Activated CD8-positive, alpha-beta T cell treated with anti-CD3 and anti-CD28 coated beads, Interleukin-2, amount 10 ng/mL, durations not matched to agents 7 days and 5 days (primary cell): ENCODE measurements at regions of chr16 and their contacts with region 1.

Region 1: DNA sequence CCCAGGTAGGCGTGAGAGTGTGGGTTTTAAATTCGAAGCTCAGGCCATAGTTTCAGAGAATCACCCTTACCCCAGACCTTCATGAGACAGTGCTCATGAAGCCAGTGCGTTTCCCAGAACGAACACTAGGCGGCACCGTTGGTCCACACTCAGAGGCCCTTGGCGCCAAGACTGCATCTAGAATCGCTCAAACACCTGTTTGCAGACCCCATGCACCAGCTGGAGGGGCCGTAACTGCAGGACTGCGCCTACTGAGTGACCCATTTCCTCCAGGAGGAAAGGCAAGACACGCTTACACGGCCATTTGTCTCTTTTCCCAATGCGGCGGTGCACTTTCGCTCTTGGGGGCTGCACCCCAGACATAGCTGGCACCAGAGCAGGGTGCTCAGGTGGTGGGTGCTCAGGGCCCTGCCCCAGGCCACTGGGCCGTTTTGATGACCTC is 34.0 kb downstream of the ADGRG5 start:
- DNase-seq: peak; percentile 93
- ATAC-seq: peak; percentile 72
- H3K4me3 Mint-ChIP-seq: peak overlapping the region; percentile 2
- H3K27ac Mint-ChIP-seq: peak overlapping the region; percentile 82
- H3K4me1 Mint-ChIP-seq: peaks cover 67% of the 10 kb centered on the region
- H3K27me3 Mint-ChIP-seq: no peaks in the 10 kb centered on the region

Region 2: DNA sequence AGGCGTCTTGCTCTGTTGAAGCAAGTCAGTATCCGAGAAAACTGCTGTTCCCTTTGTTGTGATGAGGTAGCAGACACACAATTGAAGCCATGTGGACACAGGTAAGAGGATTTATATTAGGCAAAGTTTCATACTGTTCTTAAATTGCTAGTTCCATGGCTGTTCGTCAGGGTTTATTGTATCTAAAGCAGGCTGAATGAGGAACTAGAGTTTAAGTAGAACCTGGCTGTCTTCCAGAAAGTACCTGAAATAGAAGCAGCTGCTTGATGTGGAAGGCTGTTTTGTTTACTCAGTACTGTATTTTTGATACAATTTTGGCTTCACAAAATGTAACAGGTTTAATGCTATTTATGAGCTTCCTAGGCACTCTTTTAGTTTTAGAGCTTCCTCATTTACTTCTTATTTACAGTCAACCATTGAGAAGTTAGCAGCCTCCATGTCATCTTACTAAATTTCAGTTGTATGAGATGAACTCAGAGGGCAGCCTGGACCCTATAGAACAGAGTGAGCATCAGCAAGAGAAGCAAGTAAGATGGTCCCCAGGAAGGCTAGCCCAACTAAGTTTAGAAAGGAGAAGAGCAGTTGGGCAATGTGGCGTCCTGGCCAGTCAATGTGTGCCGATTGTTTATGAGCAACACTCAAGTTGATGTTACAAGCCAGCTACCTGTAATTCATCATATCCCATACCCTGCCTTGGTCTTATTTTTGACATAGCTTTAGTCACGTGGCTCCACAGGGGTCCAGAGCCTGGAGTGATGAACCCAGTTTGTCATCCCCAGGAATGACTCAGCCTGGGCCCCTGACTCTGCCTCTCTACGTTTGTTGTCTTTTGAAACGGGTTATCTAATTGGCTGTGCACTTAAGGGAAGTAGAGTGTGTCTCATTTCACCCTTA is 341.1 kb before region 1 on chr16:
- CTCF ChIA-PET with region 1: no interaction called
- POLR2A ChIA-PET with region 1: no interaction called
- DNase-seq: no peak
- ATAC-seq: no peak
- H3K4me3 Mint-ChIP-seq: no peak overlapping the region
- H3K27ac Mint-ChIP-seq: no peak overlapping the region
- H3K4me1 Mint-ChIP-seq: peaks cover 8% of the 10 kb centered on the region
- H3K27me3 Mint-ChIP-seq: no peaks in the 10 kb centered on the region

Region 3: DNA sequence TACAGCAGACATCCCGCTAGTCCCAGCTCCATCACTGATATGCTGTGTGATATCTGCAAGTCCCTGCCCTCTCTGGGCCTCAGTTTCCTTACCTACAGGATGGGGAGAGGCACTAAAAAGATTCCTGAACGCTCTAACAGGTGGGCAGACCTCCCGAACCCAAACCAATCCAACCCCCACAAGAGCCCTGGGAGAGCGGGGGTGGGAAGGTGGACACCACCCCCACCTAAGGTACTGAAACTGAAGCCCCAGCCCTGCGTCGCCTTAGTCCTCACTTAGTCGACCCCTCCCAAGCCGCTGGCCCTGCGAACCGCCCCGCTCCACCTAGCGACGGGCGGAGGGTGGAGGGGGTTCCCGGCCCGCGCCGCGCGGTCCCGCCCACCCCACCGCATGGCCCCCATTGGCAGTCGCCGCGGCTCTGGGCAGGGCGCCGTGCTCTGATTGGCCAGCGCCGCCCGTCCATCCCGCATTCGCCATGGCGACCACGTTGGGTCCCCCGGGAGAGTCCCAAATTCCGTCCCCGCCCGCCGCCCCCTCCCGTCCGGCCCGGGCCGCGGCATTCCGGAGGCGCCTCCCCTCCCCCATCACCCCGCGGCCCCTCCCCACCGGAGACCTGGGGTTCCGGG is 40.7 kb before region 1 on chr16:
- CTCF ChIA-PET with region 1: interaction called, 31 read pairs
- POLR2A ChIA-PET with region 1: interaction called, 6 read pairs
- DNase-seq: peak; percentile 94
- ATAC-seq: peak; percentile 87
- H3K4me3 Mint-ChIP-seq: peak overlapping the region; percentile 85
- H3K27ac Mint-ChIP-seq: peak overlapping the region; percentile 87
- H3K4me1 Mint-ChIP-seq: peaks cover 82% of the 10 kb centered on the region
- H3K27me3 Mint-ChIP-seq: no peaks in the 10 kb centered on the region

Region 4: DNA sequence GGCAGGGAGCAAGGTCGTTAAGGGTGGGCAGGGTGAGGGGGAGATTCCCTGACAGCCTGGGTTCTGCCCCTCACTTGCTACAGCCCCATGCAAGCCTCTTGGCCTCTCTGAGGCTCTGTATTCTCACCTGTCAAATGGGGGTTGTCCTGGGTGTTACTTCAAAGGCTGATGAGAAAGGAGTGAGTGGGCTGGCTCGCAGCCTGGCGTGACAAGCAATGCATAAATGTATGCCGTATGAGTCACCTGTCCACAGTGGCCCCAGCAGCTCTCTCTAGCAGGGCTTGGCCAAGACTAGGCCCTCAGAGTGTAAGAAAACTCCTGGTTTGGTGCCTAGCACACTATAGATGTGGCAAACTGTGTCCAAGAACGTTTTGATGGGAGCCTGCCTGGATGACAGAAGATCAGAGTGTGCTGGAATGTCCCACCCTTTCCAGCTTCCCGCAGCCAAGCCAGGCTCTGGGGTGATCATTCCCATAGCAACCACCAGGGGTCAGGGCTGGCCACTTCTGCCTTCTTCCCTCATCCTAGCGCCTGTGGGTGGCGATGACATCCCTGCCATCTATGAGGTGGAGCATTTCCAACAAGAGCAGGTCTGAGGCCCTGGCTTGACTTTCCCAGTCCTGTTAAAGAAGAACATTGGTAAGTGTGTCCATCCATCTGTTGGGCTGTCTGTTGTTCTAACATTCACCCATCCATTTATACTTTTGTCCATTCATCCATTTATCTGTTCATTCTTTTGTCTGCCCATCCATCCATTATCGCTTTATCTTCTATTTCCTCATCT is 14.8 kb after region 1 on chr16:
- CTCF ChIA-PET with region 1: interaction called, 179 read pairs
- POLR2A ChIA-PET with region 1: interaction called, 18 read pairs
- DNase-seq: peak; percentile 85
- ATAC-seq: peak; percentile 71
- H3K4me3 Mint-ChIP-seq: peak overlapping the region; percentile 68
- H3K27ac Mint-ChIP-seq: peak overlapping the region; percentile 92
- H3K4me1 Mint-ChIP-seq: peaks cover 77% of the 10 kb centered on the region
- H3K27me3 Mint-ChIP-seq: no peaks in the 10 kb centered on the region

Region 5: GRCh38 chr16:57639172-57639887 is 62.9 kb after region 1 on chr16:
- CTCF ChIA-PET with region 1: interaction called, 17 read pairs
- POLR2A ChIA-PET with region 1: no interaction called
- DNase-seq: peak; percentile 32
- ATAC-seq: peak; percentile 62
- H3K4me3 Mint-ChIP-seq: no peak overlapping the region
- H3K27ac Mint-ChIP-seq: no peak overlapping the region
- H3K4me1 Mint-ChIP-seq: peaks cover 6% of the 10 kb centered on the region
- H3K27me3 Mint-ChIP-seq: peaks cover 11% of the 10 kb centered on the region

Region 6: GRCh38 chr16:57689762-57690558 is 113.5 kb after region 1 on chr16:
- CTCF ChIA-PET with region 1: interaction called, 11 read pairs
- POLR2A ChIA-PET with region 1: interaction called, 4 read pairs
- DNase-seq: peak; percentile 83
- ATAC-seq: peak; percentile 87
- H3K4me3 Mint-ChIP-seq: peak overlapping the region; percentile 72
- H3K27ac Mint-ChIP-seq: peak overlapping the region; percentile 93
- H3K4me1 Mint-ChIP-seq: peaks cover 59% of the 10 kb centered on the region
- H3K27me3 Mint-ChIP-seq: no peaks in the 10 kb centered on the region

Region 7: GRCh38 chr16:57757326-57757786 is 180.9 kb after region 1 on chr16:
- CTCF ChIA-PET with region 1: interaction called, 21 read pairs
- POLR2A ChIA-PET with region 1: interaction called, 3 read pairs
- DNase-seq: peak; percentile 91
- ATAC-seq: peak; percentile 94
- H3K4me3 Mint-ChIP-seq: no peak overlapping the region
- H3K27ac Mint-ChIP-seq: no peak overlapping the region
- H3K4me1 Mint-ChIP-seq: peaks cover 2% of the 10 kb centered on the region
- H3K27me3 Mint-ChIP-seq: no peaks in the 10 kb centered on the region